ENCODE measurements at regions of chr15 and their contacts with region 1.

Region 1: DNA sequence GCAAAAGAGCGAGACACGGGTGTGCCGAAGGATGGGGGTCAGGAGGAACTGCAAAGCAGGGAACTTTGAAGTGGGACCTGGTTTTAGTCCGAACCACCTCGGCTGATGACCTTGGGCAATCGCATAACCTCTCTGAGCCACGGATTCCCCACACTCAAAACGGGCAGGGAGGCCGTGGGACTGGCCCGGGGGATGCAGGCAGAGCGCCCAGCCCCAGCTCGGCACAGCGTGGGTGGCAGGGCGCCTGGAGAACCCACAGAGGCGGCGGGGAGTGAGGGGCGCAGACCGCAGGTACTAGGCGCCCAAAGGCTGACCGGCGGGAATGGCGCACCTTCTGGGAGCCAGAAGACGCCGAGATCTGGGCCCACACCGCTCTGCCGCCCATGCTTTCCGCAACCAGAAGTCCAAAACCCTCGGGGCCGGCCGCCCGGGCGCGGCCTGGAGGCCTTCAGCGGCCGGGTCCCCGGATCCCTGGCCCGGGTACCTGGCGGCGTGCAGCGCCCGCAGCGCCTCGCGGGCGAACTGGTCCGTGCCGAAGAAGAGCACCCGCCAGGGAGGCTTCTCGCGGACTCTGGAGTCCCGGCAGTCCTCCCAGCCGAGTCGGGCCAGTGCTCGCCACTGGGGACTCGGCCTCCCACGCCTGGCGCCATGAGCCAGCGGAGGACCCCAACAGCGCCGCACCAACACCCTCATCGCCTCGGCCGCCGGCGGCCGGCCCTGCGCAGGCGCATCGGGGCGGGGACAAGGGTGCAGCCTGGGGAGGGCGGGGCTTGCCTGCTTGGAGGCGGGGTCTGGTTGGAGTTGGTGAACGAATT is at the start of gene MTFMT:
- DNase-seq: peak; percentile 72 to 93 (median 87)
- ATAC-seq: peak; percentile 96
- H3K4me3 ChIP-seq: peak within 1 kb of the TSS; percentile 90
- H3K4me3 Mint-ChIP-seq: peak within 1 kb of the TSS; percentile 83 to 98 (median 93)
- H3K27ac ChIP-seq: peak within 1 kb of the TSS; percentile 76
- H3K27ac Mint-ChIP-seq: peak within 1 kb of the TSS; percentile 21 to 95 (median 79)
- H3K4me1 ChIP-seq: peaks cover 9 to 10% of the 10 kb centered on the region in 2 donors
- H3K4me1 Mint-ChIP-seq: peaks cover 15 to 43% (median 33%) of the 10 kb centered on the region in 7 donors
- H3K27me3 ChIP-seq: no peaks in the 10 kb centered on the region
- H3K27me3 Mint-ChIP-seq: peaks cover 4 to 28% (median 11%) of the 10 kb centered on the region in 5 donors
- total RNA-seq, gene MTFMT: 7.1 to 24.8 (median 12.7) TPM

Region 2: GRCh38 chr15:64836023-64836536 is 193.0 kb before region 1 on chr15:
- CTCF ChIA-PET with region 1: no interaction called
- POLR2A ChIA-PET with region 1: no interaction called
- intact Hi-C with region 1: loop called in 1 of 2 experiments (anchors 5 kb)
- DNase-seq: no peak
- ATAC-seq: no peak
- H3K4me3 ChIP-seq: no peak overlapping the region
- H3K4me3 Mint-ChIP-seq: peak overlapping the region; percentile 16 to 80 (median 72)
- H3K27ac ChIP-seq: peak overlapping the region; percentile 38
- H3K27ac Mint-ChIP-seq: peak overlapping the region; percentile 44 to 91 (median 81)
- H3K4me1 ChIP-seq: peaks cover 37 to 43% of the 10 kb centered on the region in 2 donors
- H3K4me1 Mint-ChIP-seq: peaks cover 42 to 56% (median 52%) of the 10 kb centered on the region in 7 donors
- H3K27me3 ChIP-seq: no peaks in the 10 kb centered on the region
- H3K27me3 Mint-ChIP-seq: no peaks in the 10 kb centered on the region

Region 3: GRCh38 chr15:64979252-64979710 is 49.8 kb before region 1 on chr15:
- CTCF ChIA-PET with region 1: no interaction called
- POLR2A ChIA-PET with region 1: no interaction called
- intact Hi-C with region 1: no loop called
- DNase-seq: no peak
- ATAC-seq: no peak
- H3K4me3 ChIP-seq: no peak overlapping the region
- H3K4me3 Mint-ChIP-seq: no peak overlapping the region
- H3K27ac ChIP-seq: no peak overlapping the region
- H3K27ac Mint-ChIP-seq: peak overlapping the region in 3 of 9 donors; percentile 0 to 43 (median 38)
- H3K4me1 ChIP-seq: peaks cover 0 to 2% of the 10 kb centered on the region in 2 donors
- H3K4me1 Mint-ChIP-seq: peaks cover 4 to 16% (median 9%) of the 10 kb centered on the region in 7 donors
- H3K27me3 ChIP-seq: no peaks in the 10 kb centered on the region
- H3K27me3 Mint-ChIP-seq: no peaks in the 10 kb centered on the region

Region 4: GRCh38 chr15:64989416-64990167 is 39.5 kb before region 1 on chr15 and contains the start of gene SPG21:
- CTCF ChIA-PET with region 1: no interaction called
- POLR2A ChIA-PET with region 1: interaction called, 3 read pairs
- intact Hi-C with region 1: loop called (anchors 1 kb)
- DNase-seq: peak; percentile 77 to 97 (median 85)
- ATAC-seq: peak; percentile 95
- H3K4me3 ChIP-seq: peak within 1 kb of the TSS; percentile 83
- H3K4me3 Mint-ChIP-seq: peak within 1 kb of the TSS; percentile 93 to 99 (median 97)
- H3K27ac ChIP-seq: peak within 1 kb of the TSS; percentile 76
- H3K27ac Mint-ChIP-seq: peak within 1 kb of the TSS; percentile 91 to 98 (median 94)
- H3K4me1 ChIP-seq: peaks cover 0 to 19% of the 10 kb centered on the region in 2 donors
- H3K4me1 Mint-ChIP-seq: peaks cover 33 to 55% (median 48%) of the 10 kb centered on the region in 7 donors
- H3K27me3 ChIP-seq: no peaks in the 10 kb centered on the region
- H3K27me3 Mint-ChIP-seq: no peaks in the 10 kb centered on the region
- total RNA-seq, gene SPG21: 42.5 to 72.3 (median 60.0) TPM

Region 5: DNA sequence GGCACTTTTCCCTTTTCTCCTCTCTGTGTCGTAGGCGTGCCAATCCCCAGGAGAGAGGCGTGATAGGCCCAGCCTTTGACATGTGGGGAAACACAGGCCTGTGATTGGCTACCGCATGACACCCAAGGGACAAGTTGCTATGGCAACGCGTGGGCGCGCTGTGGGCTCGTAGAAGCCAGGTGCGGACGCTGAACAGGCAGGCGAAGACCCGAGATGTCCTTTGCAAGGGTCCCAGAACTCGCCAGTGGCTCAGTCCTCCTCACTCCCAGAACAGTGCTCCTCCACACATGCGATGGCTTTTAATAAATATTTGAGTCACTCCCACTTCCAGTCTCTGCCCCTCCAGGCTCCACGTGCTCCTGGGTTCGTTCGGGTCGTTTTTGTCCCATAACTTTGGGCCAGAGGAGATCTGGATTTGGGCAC is 20.3 kb after region 1 on chr15:
- CTCF ChIA-PET with region 1: no interaction called
- POLR2A ChIA-PET with region 1: interaction called, 3 read pairs
- intact Hi-C with region 1: loop called in 1 of 2 experiments (anchors 2 kb)
- DNase-seq: peak; percentile 59 to 89 (median 83)
- ATAC-seq: peak; percentile 99
- H3K4me3 ChIP-seq: peak overlapping the region; percentile 62
- H3K4me3 Mint-ChIP-seq: peak overlapping the region; percentile 63 to 88 (median 74)
- H3K27ac ChIP-seq: no peak overlapping the region
- H3K27ac Mint-ChIP-seq: peak overlapping the region in 7 of 9 donors; percentile 10 to 80 (median 63)
- H3K4me1 ChIP-seq: peaks cover 4 to 11% of the 10 kb centered on the region in 2 donors
- H3K4me1 Mint-ChIP-seq: peaks cover 0 to 18% (median 12%) of the 10 kb centered on the region in 7 donors
- H3K27me3 ChIP-seq: no peaks in the 10 kb centered on the region
- H3K27me3 Mint-ChIP-seq: peaks cover 0 to 10% (median 0%) of the 10 kb centered on the region in 5 donors

Region 6: DNA sequence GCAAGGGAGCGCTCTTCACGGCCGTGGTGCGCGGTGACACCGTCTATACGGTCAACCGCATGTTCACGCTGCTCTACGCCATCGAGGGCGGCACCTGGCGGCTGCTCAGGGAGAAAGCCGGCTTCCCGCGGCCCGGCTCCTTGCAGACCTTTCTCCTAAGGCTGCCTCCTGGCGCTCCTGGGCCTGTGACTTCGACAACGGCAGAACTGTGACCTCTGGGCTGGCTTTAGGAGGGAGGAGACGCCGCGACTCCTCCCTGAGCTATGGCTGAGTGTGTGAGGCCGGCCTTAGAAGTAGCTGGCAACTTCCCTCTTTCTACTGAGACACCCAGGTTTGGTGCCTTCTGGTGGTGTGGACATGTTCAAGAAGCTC is 48.8 kb after region 1 on chr15:
- CTCF ChIA-PET with region 1: interaction called, 11 read pairs
- POLR2A ChIA-PET with region 1: no interaction called
- intact Hi-C with region 1: loop called in 1 of 2 experiments (anchors 1 kb)
- DNase-seq: peak in 8 of 9 donors; percentile 18 to 54 (median 39)
- ATAC-seq: peak; percentile 74
- H3K4me3 ChIP-seq: no peak overlapping the region
- H3K4me3 Mint-ChIP-seq: peak overlapping the region in 7 of 10 donors; percentile 11 to 80 (median 52)
- H3K27ac ChIP-seq: no peak overlapping the region
- H3K27ac Mint-ChIP-seq: peak overlapping the region in 1 of 9 donors; percentile 74
- H3K4me1 ChIP-seq: peaks cover 0 to 11% of the 10 kb centered on the region in 2 donors
- H3K4me1 Mint-ChIP-seq: peaks cover 13 to 25% (median 19%) of the 10 kb centered on the region in 7 donors
- H3K27me3 ChIP-seq: no peaks in the 10 kb centered on the region
- H3K27me3 Mint-ChIP-seq: peaks cover 16 to 35% (median 32%) of the 10 kb centered on the region in 5 donors

Region 7: GRCh38 chr15:65384895-65385858 is 356.0 kb after region 1 on chr15:
- CTCF ChIA-PET with region 1: interaction called, 4 read pairs
- POLR2A ChIA-PET with region 1: no interaction called
- intact Hi-C with region 1: loop called in 1 of 2 experiments (anchors 1 kb)
- DNase-seq: peak; percentile 65 to 85 (median 78)
- ATAC-seq: peak; percentile 92
- H3K4me3 ChIP-seq: peak overlapping the region; percentile 83
- H3K4me3 Mint-ChIP-seq: peak overlapping the region; percentile 85 to 91 (median 90)
- H3K27ac ChIP-seq: peak overlapping the region; percentile 49
- H3K27ac Mint-ChIP-seq: peak overlapping the region in 5 of 9 donors; percentile 41 to 78 (median 67)
- H3K4me1 ChIP-seq: peaks cover 4 to 9% of the 10 kb centered on the region in 2 donors
- H3K4me1 Mint-ChIP-seq: peaks cover 4 to 11% (median 8%) of the 10 kb centered on the region in 7 donors
- H3K27me3 ChIP-seq: no peaks in the 10 kb centered on the region
- H3K27me3 Mint-ChIP-seq: peaks cover 5 to 44% (median 14%) of the 10 kb centered on the region in 5 donors